ENCODE measurements at regions of chr5 and their contacts with region 1.

Region 1: DNA sequence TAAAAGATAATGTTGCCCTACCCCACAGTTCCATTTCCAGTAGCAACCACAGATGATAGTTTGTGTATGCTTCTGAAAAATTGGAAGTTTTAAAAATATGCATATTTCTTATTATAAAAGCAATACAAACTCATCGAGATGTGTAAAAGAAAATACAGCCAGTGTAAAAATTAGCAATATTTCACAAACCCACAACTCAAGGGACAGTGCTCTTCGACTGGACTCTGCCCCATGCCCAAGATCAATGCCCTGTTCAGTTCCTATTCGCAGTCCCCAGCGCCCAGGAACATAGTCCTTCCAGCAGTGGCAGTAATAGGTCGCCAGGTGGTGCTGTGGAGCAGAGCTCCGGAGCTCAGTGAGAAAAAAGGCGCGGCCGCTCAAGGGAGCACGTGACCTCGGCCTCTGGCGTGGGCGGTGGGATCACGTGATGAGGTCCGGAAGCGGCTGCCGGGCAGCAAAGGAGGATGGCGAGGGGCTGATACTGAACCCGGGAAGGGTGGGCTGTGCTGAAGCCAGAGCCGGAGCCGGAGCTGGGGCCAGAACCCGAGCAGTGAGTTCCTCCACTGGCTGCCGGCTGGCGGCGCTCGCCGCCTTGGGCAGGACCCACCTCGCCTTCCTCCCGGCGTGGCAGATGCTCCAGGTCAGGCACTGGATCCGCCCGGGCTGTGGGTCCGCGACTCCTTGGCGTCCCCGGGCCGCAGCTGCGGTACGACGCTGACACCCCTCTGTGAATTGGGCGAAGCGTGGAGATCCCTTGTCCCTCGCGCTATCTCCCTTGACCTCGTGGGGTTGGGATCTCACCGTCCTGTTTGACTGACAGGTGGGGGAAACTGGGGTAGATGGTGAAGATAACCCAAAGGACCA is at the start of gene SLC36A1:
- DNase-seq: peak; percentile 96
- ATAC-seq: peak; percentile 87
- H3K4me3 Mint-ChIP-seq: peak within 1 kb of the TSS; percentile 94
- H3K27ac Mint-ChIP-seq: peak within 1 kb of the TSS; percentile 75
- H3K4me1 Mint-ChIP-seq: peaks cover 17% of the 10 kb centered on the region
- H3K27me3 Mint-ChIP-seq: no peaks in the 10 kb centered on the region; the same call in 1 of the 2 replicates
- CTCF ChIP-seq: peak; percentile 91
- total RNA-seq, gene SLC36A1: 12.2 to 16.0 TPM (median 13.7 TPM) in 3 replicates

Region 2: DNA sequence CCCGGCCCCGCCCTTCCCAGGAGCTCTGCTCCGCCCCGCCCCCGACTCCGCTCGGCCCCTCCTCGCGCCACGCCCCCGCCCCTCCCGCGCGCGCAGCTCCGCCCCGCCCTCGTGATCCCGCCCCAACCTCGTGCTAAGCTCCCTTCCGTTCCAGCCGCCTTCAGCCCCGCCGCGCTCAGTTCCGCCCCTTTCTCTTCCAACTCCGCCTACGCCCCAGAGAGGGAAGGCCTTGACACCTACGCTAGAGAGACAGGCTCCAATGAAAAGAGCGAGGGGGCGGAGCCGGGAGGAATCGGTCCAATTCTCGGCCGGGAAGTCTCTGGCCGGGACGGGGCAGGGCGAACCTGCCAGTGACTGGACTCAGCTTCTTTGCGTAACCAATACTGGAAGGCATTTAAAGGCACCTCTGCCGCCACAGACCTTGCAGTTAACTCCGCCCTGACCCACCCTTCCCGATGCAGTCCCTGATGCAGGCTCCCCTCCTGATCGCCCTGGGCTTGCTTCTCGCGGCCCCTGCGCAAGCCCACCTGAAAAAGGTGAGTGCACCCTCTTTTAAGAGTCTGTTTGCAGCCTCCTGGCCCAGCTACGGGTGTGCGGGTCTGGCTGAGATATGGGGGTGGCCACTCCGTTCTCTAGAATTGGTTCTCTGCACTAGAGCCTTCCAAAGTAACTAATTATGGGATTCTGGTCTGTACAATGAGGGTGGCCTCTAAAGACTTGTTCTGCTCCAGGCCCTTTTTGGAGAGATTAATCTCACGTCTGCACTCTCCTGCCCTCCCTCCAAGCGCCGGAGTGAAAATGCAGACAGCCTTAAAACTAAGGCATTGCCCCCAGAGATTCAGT is 194.4 kb before region 1 on chr5 and contains the start of gene GM2A:
- CTCF ChIA-PET with region 1: interaction called, 12 read pairs
- POLR2A ChIA-PET with region 1: no interaction called
- DNase-seq: peak; percentile 100
- ATAC-seq: peak; percentile 96
- H3K4me3 Mint-ChIP-seq: peak within 1 kb of the TSS; percentile 90
- H3K27ac Mint-ChIP-seq: peak within 1 kb of the TSS; percentile 92
- H3K4me1 Mint-ChIP-seq: peaks cover 35% of the 10 kb centered on the region
- H3K27me3 Mint-ChIP-seq: peaks cover 6% of the 10 kb centered on the region
- CTCF ChIP-seq: no peak
- total RNA-seq, gene GM2A: 33.1 to 36.2 TPM (median 33.2 TPM) in 3 replicates

Region 3: DNA sequence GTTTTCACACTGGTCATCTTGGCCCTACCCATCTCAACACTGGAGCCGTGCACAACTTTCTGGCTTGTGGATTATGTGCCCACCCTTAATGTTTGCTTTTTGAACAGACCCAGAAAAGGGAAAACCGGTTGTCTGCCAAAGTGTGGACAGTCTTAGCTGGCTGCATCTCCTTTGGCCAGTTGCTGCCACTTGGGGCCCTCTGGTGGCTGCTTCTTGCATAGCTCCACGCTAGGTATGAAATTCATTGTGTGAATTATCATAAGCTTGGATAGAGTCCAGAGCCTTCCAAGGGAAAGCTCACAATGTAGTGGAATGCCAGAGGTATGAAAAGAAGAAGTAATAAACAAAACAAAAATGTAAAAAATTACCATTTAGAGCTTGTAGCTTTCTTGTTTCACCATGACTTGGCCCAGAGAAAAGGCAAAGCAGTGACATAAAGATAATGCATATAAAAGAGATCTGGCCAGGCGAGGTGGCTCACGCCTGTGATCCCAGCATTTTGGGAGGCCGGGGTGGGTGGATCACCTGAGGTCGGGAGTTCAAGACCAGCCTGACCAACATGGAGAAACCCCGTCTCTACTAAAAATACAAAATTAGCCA is 131.3 kb before region 1 on chr5:
- CTCF ChIA-PET with region 1: interaction called, 12 read pairs
- POLR2A ChIA-PET with region 1: no interaction called
- DNase-seq: peak; percentile 78
- ATAC-seq: peak; percentile 76
- H3K4me3 Mint-ChIP-seq: no peak overlapping the region
- H3K27ac Mint-ChIP-seq: no peak overlapping the region
- H3K4me1 Mint-ChIP-seq: peaks cover 18% of the 10 kb centered on the region
- H3K27me3 Mint-ChIP-seq: no peaks in the 10 kb centered on the region
- CTCF ChIP-seq: peak; percentile 78

Region 4: DNA sequence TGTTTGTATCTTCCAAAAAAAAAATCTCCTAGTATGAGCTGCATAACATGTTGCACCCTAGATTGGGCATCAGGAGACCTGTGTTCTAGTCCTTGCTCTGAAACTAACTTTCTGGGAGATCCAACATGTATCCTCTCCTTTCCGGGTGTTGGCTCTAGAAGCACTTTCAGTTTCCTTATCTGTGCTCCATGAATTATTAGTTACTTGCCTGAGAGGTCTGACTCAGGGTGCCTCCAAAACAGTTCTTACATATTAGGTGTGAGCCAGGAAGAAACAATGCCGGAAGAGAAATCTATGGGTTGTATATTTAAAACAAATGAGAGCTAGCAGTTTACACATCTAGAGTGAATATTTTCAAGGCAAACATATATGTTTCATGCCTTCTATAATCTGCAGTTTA is 63.3 kb before region 1 on chr5:
- CTCF ChIA-PET with region 1: interaction called, 16 read pairs
- POLR2A ChIA-PET with region 1: interaction called, 3 read pairs
- DNase-seq: no peak
- ATAC-seq: no peak
- H3K4me3 Mint-ChIP-seq: no peak overlapping the region
- H3K27ac Mint-ChIP-seq: no peak overlapping the region
- H3K4me1 Mint-ChIP-seq: peaks cover 55% of the 10 kb centered on the region
- H3K27me3 Mint-ChIP-seq: peaks cover 2% of the 10 kb centered on the region; the same call in 1 of the 2 replicates
- CTCF ChIP-seq: no peak

Region 5: DNA sequence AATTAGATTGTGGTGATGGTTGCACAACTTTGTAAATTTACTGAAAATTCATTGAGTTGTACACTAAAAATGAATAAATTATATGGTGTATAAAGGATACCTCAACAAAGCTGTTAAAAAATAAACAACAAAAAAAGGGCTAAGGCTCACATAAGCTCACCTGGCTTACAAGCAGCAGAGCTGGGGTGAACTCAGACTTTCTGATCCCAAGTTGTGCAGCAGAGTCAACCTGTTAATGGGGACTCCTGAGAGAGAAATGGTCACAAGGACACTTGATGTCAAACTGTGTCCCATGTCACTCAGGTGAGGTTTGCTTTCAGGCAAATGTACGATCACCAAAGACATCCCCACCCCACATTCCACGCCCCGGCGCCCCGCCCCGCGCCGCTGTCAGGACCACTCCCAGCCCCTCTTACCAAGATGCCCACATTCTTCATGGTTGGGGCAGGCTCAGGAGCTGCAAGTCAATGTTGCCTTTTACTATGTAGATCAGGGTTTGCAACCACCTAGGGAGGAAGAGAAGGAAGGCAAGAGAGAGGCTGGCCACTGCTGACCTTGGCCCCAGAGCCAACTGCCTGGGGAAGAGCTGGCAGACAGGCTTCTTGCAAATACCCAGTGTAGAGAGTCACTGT is 22.4 kb before region 1 on chr5:
- CTCF ChIA-PET with region 1: interaction called, 10 read pairs
- POLR2A ChIA-PET with region 1: no interaction called
- DNase-seq: peak; percentile 75
- ATAC-seq: peak; percentile 99
- H3K4me3 Mint-ChIP-seq: no peak overlapping the region
- H3K27ac Mint-ChIP-seq: no peak overlapping the region; the same call in 1 of the 2 replicates
- H3K4me1 Mint-ChIP-seq: peaks cover 23% of the 10 kb centered on the region
- H3K27me3 Mint-ChIP-seq: no peaks in the 10 kb centered on the region; the same call in 1 of the 2 replicates
- CTCF ChIP-seq: no peak

Region 6: GRCh38 chr5:151432210-151432609 is 15.2 kb before region 1 on chr5:
- CTCF ChIA-PET with region 1: interaction called, 22 read pairs
- POLR2A ChIA-PET with region 1: no interaction called
- DNase-seq: no peak
- ATAC-seq: peak; percentile 60; the same call in 1 of the 2 replicates
- H3K4me3 Mint-ChIP-seq: no peak overlapping the region
- H3K27ac Mint-ChIP-seq: no peak overlapping the region
- H3K4me1 Mint-ChIP-seq: no peaks in the 10 kb centered on the region
- H3K27me3 Mint-ChIP-seq: no peaks in the 10 kb centered on the region
- CTCF ChIP-seq: no peak

Region 7: DNA sequence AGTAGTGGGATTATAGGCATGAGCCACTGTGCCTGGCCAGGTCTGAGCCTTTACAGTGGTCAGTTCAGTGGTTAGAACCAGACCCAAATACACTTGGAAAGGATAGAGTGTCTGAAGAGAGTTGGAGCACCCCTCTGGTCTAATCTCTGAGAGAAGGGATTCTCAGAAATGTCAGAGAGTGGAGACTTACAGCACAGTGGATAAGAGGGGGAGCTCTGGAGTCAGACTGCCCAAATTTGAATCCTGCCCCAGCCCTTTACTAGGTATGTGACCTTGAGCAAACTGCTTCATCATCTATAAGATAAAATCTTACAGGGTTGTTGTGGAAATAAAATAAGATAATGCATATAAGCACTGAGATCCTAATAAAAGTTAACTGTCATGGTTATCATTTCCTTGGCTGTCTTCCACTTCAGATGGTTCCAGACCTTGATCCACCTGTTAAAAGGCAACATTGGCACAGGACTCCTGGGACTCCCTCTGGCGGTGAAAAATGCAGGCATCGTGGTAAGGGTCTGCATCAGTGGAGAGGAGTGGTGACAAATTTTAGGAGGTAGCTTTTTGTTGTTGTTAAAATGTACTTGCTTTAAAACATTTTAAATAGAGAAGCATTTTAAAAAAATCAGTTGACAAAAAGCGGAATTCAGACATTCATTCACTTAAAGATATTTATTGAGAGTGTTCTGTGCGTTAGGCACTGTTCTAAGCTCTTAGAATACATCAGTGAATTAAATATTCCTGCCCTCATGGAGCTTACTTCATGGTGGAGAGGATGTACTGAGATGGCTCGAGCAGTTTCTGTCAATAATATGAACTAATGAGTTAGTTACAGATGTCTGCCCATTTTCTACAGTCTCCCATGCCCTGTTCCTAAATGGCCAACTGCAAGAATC is 16.0 kb after region 1 on chr5:
- CTCF ChIA-PET with region 1: interaction called, 31 read pairs
- POLR2A ChIA-PET with region 1: no interaction called
- DNase-seq: peak; percentile 72
- ATAC-seq: peak; percentile 93
- H3K4me3 Mint-ChIP-seq: no peak overlapping the region
- H3K27ac Mint-ChIP-seq: no peak overlapping the region
- H3K4me1 Mint-ChIP-seq: no peaks in the 10 kb centered on the region
- H3K27me3 Mint-ChIP-seq: no peaks in the 10 kb centered on the region
- CTCF ChIP-seq: peak; percentile 66; the same call in 1 of the 2 replicates

Region 8: DNA sequence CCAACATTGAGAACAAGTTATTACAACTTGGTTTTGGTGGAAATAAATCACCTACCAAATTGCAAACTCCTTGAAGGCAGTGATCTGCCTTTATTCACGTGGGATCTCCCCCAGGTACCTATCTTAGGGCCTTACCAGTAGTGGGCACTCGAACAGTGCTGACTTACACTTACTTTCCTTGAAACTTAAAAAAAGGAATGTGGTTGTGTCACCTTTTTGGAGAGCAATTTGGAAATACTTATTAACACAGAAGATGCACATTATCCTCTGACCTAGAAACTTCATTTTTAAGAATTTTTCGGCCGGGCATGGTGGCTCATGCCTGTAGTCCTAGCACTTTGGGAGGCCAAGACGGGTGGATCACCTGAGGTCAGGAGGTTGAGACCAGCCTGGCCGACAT is 117.1 kb after region 1 on chr5:
- CTCF ChIA-PET with region 1: no interaction called
- POLR2A ChIA-PET with region 1: no interaction called
- DNase-seq: no peak
- ATAC-seq: no peak
- H3K4me3 Mint-ChIP-seq: no peak overlapping the region
- H3K27ac Mint-ChIP-seq: no peak overlapping the region
- H3K4me1 Mint-ChIP-seq: peaks cover 15% of the 10 kb centered on the region
- H3K27me3 Mint-ChIP-seq: peaks cover 18% of the 10 kb centered on the region
- CTCF ChIP-seq: no peak